Aorta (tissue), 5 donors: ENCODE measurements at regions of chr12 and their contacts with region 1.

Region 1: DNA sequence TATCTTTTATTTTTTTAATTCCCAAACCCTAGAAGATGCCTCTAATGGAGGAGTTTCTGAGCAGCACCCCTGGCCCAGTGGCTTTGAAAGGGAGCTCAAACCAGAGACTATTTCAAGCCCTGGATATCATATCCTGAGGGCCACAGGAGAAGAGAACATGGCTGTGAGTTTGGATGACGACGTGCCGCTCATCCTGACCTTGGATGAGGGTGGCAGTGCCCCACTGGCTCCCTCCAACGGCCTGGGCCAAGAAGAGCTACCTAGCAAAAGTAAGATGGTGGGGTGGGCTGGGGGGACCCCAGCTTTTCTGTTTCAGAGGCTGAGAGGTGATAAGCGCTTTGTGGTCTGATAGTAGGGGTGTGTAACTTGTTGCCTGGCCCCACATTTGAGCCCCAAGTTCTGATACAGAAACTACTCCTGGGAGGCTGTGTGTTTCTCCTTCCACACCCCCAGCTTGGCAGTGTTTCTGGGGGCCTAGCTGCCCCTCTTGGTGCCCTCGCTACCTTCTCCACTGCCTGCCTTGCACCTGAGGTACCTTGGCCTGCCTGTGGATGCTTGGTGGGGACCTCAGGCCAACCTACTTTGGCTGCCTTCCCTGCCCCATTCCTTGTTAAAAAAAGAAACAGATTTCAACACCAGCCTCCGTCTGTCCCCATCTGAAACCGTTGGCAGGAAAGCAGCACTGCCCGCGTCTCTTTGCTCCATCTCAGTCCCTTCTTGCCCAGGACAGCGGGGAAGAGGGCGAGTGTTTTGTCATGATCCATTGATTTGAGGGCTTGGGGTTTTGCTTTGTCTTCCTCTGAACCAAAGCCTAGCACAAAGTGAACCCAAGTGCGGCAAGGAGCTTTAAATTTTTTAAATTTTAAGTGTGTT is 5.7 kb downstream of the TPCN1 start:
- DNase-seq: peak in 1 of 2 donors; percentile 64
- ATAC-seq: peak; percentile 34
- H3K4me3 ChIP-seq: no peak overlapping the region
- H3K27ac ChIP-seq: peak overlapping the region; percentile 86 to 97
- H3K4me1 ChIP-seq: peaks cover 3 to 6% of the 10 kb centered on the region in 2 donors
- H3K27me3 ChIP-seq: no peaks in the 10 kb centered on the region

Region 2: DNA sequence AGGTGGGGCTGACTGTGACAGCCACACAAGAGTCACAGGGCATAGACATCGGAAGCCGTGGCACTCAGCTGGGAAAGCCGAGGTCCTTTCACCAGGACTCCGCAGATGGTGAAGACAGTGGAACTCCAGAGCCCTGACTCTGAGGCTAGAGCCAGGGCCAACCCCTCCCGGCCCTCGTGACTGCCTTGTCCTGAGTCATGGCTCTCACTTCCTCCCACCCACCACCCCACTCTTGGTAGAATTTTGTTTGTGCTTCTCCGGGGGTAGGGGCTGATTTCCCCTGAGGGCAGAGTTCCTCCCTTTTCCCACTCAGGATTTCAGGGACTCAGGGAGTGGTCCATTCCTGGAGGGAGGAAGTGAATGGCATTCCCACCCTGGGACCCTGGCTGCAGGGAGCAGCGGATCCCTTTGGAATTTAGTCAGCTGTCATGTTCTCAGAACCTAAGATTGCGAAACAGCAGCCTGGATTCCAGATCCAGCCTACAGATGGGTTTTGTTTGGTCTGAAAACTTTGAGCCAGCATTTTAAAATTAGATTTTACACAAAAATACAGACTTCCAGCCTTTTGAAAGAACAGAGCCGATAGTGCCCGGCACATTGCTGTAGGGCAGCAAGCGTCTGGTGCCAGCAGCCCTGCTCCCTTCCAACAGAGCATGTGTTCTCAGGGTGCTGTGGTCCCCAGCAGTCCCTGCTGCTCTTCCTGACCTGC is 45.1 kb after region 1 on chr12:
- intact Hi-C with region 1: loop called in 1 of 2 experiments (anchors 5 kb)
- DNase-seq: peak; percentile 91 to 94
- ATAC-seq: peak; percentile 95
- H3K4me3 ChIP-seq: no peak overlapping the region
- H3K27ac ChIP-seq: peak overlapping the region; percentile 84 to 93
- H3K4me1 ChIP-seq: peaks cover 0 to 2% of the 10 kb centered on the region in 2 donors
- H3K27me3 ChIP-seq: no peaks in the 10 kb centered on the region